Activated CD4-positive, alpha-beta T cell treated with anti-CD3 and anti-CD28 coated beads, Interleukin-2, amount 10 ng/mL, durations not matched to agents 7 days and 5 days (primary cell): ENCODE measurements at regions of chr16 and their contacts with region 1.

Region 1: GRCh38 chr16:11535471-11535870 is 51.2 kb downstream of the LITAF start:
- DNase-seq: no peak
- H3K4me3 Mint-ChIP-seq: no peak overlapping the region
- H3K27ac Mint-ChIP-seq: peak overlapping the region; percentile 10
- H3K4me1 Mint-ChIP-seq: peaks cover 15% of the 10 kb centered on the region
- H3K27me3 Mint-ChIP-seq: no peaks in the 10 kb centered on the region

Region 2: GRCh38 chr16:11429123-11429522 is 106.3 kb before region 1 on chr16:
- CTCF ChIA-PET with region 1: no interaction called
- POLR2A ChIA-PET with region 1: no interaction called
- DNase-seq: no peak
- H3K4me3 Mint-ChIP-seq: no peak overlapping the region
- H3K27ac Mint-ChIP-seq: no peak overlapping the region
- H3K4me1 Mint-ChIP-seq: no peaks in the 10 kb centered on the region
- H3K27me3 Mint-ChIP-seq: no peaks in the 10 kb centered on the region

Region 3: GRCh38 chr16:11481987-11482386 is 53.5 kb before region 1 on chr16:
- CTCF ChIA-PET with region 1: no interaction called
- POLR2A ChIA-PET with region 1: no interaction called
- DNase-seq: no peak
- H3K4me3 Mint-ChIP-seq: no peak overlapping the region
- H3K27ac Mint-ChIP-seq: no peak overlapping the region
- H3K4me1 Mint-ChIP-seq: no peaks in the 10 kb centered on the region
- H3K27me3 Mint-ChIP-seq: no peaks in the 10 kb centered on the region

Region 4: DNA sequence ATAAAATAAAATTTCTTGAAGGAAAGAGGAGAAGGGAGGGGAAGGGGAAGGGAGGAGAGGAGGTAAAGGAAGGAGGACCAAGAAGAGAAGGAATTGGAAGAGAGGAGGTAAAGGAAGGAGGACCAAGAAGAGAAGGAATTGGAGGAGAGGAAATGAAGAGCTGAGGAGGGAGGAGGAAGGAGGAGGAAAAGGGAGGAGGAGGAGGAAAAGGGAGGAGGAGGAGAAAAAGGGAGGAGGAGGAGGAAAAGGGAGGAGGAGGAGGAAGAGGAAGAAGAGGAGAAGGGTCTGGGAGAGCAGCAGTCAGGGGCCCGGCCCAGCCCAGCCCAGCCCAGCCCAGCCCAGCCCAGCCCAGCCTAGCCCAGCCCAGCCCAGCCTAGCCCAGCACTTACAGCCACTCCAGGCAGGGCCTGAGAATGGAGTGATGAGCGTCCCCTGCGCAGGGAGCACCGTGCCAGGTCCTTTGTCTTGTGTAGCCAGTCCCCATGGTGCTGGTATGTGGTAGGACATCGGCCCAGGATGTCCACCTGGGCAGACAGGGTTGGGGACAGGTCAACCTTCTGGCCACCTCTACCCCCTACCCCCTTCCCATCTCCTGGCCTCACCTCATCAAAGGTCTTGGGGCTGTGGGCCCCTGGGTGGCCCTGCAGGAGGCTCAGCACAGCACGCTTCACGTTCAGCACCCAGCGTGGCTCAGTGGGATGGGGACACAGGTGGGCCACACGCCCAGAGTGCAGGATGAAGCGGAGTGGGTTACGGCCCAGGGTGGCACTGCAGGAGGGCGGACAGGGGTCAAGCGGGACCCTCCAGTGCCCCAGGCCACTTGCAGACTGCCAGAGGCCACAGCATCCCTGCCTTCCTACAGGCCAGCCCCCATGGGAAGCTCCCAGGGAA is 19.7 kb before region 1 on chr16:
- CTCF ChIA-PET with region 1: interaction called, 11 read pairs
- POLR2A ChIA-PET with region 1: no interaction called
- DNase-seq: no peak
- H3K4me3 Mint-ChIP-seq: no peak overlapping the region
- H3K27ac Mint-ChIP-seq: no peak overlapping the region
- H3K4me1 Mint-ChIP-seq: no peaks in the 10 kb centered on the region
- H3K27me3 Mint-ChIP-seq: no peaks in the 10 kb centered on the region

Region 5: DNA sequence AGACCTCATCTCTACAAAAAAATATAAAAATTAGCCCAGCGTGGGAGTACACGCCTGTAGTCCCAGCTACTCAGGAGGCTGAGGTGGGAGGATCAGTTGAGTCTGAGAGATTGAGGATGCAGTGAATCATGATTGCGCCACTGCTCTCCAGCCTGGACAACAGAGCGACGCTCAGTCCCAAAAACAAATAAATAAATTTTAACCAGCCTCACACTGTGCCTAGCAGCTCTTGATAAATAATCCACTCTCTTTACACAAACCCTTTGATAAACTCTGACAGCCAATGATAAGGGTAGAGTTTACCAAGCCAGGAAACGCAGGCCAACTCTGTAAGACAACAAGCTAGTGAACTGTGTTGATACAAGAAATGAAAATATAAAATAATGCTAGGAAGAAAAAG is 18.6 kb after region 1 on chr16:
- CTCF ChIA-PET with region 1: interaction called, 11 read pairs
- POLR2A ChIA-PET with region 1: no interaction called
- DNase-seq: no peak
- H3K4me3 Mint-ChIP-seq: no peak overlapping the region
- H3K27ac Mint-ChIP-seq: peak overlapping the region; percentile 16
- H3K4me1 Mint-ChIP-seq: peaks cover 42% of the 10 kb centered on the region
- H3K27me3 Mint-ChIP-seq: no peaks in the 10 kb centered on the region

Region 6: GRCh38 chr16:11639925-11640899 is 104.7 kb after region 1 on chr16:
- CTCF ChIA-PET with region 1: interaction called, 13 read pairs
- POLR2A ChIA-PET with region 1: interaction called, 4 read pairs
- DNase-seq: no peak
- H3K4me3 Mint-ChIP-seq: no peak overlapping the region
- H3K27ac Mint-ChIP-seq: no peak overlapping the region
- H3K4me1 Mint-ChIP-seq: peaks cover 18% of the 10 kb centered on the region
- H3K27me3 Mint-ChIP-seq: peaks cover 9% of the 10 kb centered on the region